Panc1 (cell line): ENCODE measurements at regions of chr10 and their contacts with region 1.

Region 1: GRCh38 chr10:63758080-63758479 is 236.9 kb downstream of the REEP3 start:
- DNase-seq: no peak
- ATAC-seq: no peak
- H3K4me3 ChIP-seq: no peak overlapping the region
- H3K27ac ChIP-seq: no peak overlapping the region
- H3K4me1 ChIP-seq: no peaks in the 10 kb centered on the region
- H3K27me3 ChIP-seq: no peaks in the 10 kb centered on the region; the same call in 1 of the 2 replicates
- CTCF ChIP-seq: no peak

Region 2: DNA sequence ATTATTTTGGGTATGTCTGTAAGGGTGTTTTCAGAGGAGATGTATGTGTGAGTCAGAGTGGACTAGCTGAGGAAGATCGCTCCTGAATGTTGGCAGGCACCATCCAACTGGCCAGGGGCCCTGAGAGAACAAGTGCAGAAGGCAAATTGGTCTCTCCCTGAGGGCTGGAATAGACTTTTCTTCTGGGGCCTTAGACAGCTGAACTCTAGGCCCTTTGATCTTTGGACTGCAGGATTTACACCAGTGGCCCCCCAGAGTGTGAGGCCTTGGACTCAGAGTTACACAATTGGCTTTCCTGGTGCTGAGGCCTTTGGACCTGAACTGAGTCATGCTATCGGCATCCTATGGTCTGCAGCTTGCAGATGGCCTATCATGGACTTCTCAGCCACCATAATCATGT is 19.7 kb before region 1 on chr10:
- CTCF ChIA-PET with region 1: no interaction called
- POLR2A ChIA-PET with region 1: interaction called, 11 read pairs
- in situ Hi-C with region 1: no loop called
- intact Hi-C with region 1: no loop called
- DNase-seq: no peak
- ATAC-seq: 0 out of 2 replicates have a peak, but pooled peaks have one; percentile 53
- H3K4me3 ChIP-seq: no peak overlapping the region
- H3K27ac ChIP-seq: no peak overlapping the region
- H3K4me1 ChIP-seq: no peaks in the 10 kb centered on the region
- H3K27me3 ChIP-seq: no peaks in the 10 kb centered on the region
- CTCF ChIP-seq: no peak

Region 3: DNA sequence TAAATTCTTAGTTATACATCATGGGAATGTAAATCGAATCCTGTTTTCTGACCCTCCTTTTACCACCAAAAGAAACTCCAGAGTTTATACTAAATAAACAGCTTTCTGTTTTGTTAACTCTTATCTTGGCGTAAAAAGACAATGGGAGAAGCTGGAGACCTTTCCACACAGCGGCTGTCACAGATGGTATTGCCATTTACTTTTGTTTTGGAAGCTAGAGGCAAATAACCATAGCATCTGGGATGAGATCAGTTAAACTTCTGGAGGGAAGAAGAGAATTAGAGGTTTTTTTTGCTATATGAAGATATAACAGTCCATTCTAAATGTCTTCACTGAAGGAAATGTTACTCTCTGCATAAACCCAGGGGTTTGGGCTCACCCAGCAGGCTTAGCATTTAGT is 22.0 kb after region 1 on chr10:
- CTCF ChIA-PET with region 1: no interaction called
- POLR2A ChIA-PET with region 1: interaction called, 15 read pairs
- in situ Hi-C with region 1: no loop called
- intact Hi-C with region 1: no loop called
- DNase-seq: no peak
- ATAC-seq: no peak
- H3K4me3 ChIP-seq: no peak overlapping the region
- H3K27ac ChIP-seq: no peak overlapping the region
- H3K4me1 ChIP-seq: no peaks in the 10 kb centered on the region
- H3K27me3 ChIP-seq: peaks cover 31% of the 10 kb centered on the region
- CTCF ChIP-seq: no peak

Region 4: GRCh38 chr10:63887023-63887589 is 129.0 kb after region 1 on chr10:
- CTCF ChIA-PET with region 1: no interaction called
- POLR2A ChIA-PET with region 1: no interaction called
- in situ Hi-C with region 1: no loop called
- intact Hi-C with region 1: no loop called
- DNase-seq: no peak
- ATAC-seq: peak; percentile 58; the same call in 1 of the 2 replicates
- H3K4me3 ChIP-seq: no peak overlapping the region
- H3K27ac ChIP-seq: no peak overlapping the region
- H3K4me1 ChIP-seq: no peaks in the 10 kb centered on the region
- H3K27me3 ChIP-seq: peaks cover 14% of the 10 kb centered on the region; the same call in 1 of the 2 replicates
- CTCF ChIP-seq: peak; percentile 62